Naive thymus-derived CD8-positive, alpha-beta T cell (primary cell): ENCODE measurements at regions of chr11 and their contacts with region 1.

Region 1: GRCh38 chr11:20387241-20388095 is at the start of gene PRMT3:
- DNase-seq: peak; percentile 95 to 99 (median 98)
- ATAC-seq: peak; percentile 87 to 89
- H3K4me3 Mint-ChIP-seq: peak within 1 kb of the TSS; percentile 94 to 99 (median 97)
- H3K27ac Mint-ChIP-seq: peak within 1 kb of the TSS; percentile 98 to 100 (median 100)
- H3K4me1 Mint-ChIP-seq: peaks cover 15 to 37% (median 28%) of the 10 kb centered on the region in 4 donors
- H3K27me3 Mint-ChIP-seq: no peaks in the 10 kb centered on the region
- polyA plus RNA-seq, gene PRMT3: 6.5 to 8.7 (median 7.4) TPM

Region 2: DNA sequence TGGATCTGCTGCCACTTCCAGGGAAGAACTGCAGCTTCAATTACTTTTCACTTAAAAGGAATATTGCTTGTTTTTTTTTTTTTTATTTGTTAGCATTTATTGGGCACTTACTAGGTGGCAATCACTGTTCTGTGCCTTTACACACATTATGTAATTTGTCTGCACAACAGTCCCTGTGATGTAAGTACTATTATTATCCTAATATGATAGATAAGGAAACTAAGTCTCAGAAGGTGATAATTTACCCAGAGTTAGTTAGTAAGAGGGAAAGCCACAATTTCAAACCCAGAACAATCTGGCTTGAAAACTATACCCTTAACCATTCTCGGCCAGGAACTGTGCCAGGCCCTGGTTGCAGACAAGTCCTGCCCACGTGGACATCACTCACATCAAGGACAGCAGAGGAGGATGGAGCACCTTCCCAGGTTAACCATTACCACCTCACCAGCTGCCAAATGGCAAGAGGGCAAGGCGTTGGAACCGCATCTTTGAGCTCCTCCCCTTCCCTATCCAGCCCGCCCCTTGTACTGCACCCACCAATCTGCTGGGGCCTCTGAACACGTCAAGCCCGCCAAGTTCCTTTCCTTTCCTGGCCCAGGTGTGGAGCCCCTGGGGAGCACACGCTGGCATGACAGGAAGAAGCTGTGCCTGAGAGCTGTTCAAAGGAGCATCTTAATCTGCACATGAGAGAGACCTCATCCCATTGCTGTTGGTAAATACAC is 596.5 kb before region 1 on chr11:
- POLR2A ChIA-PET with region 1: no interaction called
- DNase-seq: no peak
- ATAC-seq: no peak
- H3K4me3 Mint-ChIP-seq: no peak overlapping the region
- H3K27ac Mint-ChIP-seq: no peak overlapping the region
- H3K4me1 Mint-ChIP-seq: no peaks in the 10 kb centered on the region
- H3K27me3 Mint-ChIP-seq: peaks cover 0 to 21% (median 10%) of the 10 kb centered on the region in 5 donors

Region 3: GRCh38 chr11:20363500-20364411 is 23.7 kb before region 1 on chr11 and contains the start of gene HTATIP2:
- POLR2A ChIA-PET with region 1: interaction called, 12 read pairs
- DNase-seq: peak; percentile 54 to 87 (median 72)
- ATAC-seq: peak; percentile 87 to 94
- H3K4me3 Mint-ChIP-seq: peak within 1 kb of the TSS; percentile 84 to 97 (median 89)
- H3K27ac Mint-ChIP-seq: peak within 1 kb of the TSS; percentile 73 to 98 (median 94)
- H3K4me1 Mint-ChIP-seq: peaks cover 30 to 67% (median 59%) of the 10 kb centered on the region in 4 donors
- H3K27me3 Mint-ChIP-seq: no peaks in the 10 kb centered on the region
- polyA plus RNA-seq, gene HTATIP2: 52.8 to 54.4 (median 53.0) TPM

Region 4: GRCh38 chr11:20407344-20407743 is 19.9 kb after region 1 on chr11:
- POLR2A ChIA-PET with region 1: no interaction called
- DNase-seq: no peak
- ATAC-seq: no peak
- H3K4me3 Mint-ChIP-seq: no peak overlapping the region
- H3K27ac Mint-ChIP-seq: no peak overlapping the region
- H3K4me1 Mint-ChIP-seq: peaks cover 0 to 2% (median 0%) of the 10 kb centered on the region in 4 donors
- H3K27me3 Mint-ChIP-seq: no peaks in the 10 kb centered on the region